Stomach (tissue), 19 donors: ENCODE measurements at regions of chr1 and their contacts with region 1.

Region 1: GRCh38 chr1:64823691-64824476 is 79.0 kb downstream of the RAVER2 start:
- DNase-seq: peak; percentile 75 to 92
- H3K4me3 ChIP-seq: no peak overlapping the region
- H3K27ac ChIP-seq: no peak overlapping the region
- H3K4me1 ChIP-seq: peaks cover 0 to 10% (median 5%) of the 10 kb centered on the region in 4 donors
- H3K27me3 ChIP-seq: no peaks in the 10 kb centered on the region
- CTCF ChIP-seq: peak in 5 of 7 experiments; percentile 73 to 89 (median 78)
- EP300 ChIP-seq: no peak
- POLR2A ChIP-seq: no peak

Region 2: DNA sequence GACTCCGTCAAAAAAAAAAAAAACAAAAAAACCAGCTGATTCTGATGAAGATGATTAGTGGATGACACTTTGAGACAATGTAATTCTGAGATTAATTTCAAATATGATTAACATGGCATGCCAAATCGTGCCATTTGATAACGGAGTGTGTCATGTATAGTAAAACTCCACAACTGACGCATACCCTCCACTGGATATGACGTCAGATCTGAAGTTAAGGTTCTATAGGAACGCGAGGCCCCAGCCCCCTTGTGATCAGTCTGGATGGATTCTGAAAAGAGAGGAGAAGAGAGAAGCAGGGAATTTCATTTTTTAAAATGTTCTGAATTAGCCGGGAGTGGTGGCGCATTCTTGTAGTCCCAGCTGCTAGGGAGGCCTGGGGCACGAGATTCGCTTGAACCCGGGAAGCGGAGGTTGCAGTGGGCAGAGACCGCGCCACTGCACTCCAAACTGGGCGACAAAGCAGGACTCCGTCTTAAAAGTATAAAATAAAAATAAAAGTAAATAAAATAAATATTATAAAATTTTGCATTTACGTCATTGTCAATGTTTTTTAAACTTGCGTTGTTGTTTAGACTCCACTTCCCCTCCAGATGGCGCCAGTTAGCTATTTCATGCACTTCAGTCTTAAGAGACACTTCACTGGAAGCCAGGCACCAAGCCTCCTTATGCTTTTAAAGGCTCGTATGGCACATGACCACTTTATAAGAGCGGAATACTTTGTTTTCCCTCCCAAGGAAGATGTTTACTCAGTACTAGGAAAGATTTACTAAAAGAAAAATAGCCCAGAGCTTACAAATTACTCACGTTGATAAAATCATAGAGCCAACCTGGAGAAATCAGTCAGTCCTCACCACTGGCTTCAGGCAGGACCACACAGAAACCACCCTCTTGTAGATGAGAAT is 555.0 kb before region 1 on chr1:
- intact Hi-C with region 1: loop called (anchors 10 kb)
- DNase-seq: peak; percentile 71 to 94
- H3K4me3 ChIP-seq: peak overlapping the region in 1 of 4 donors; percentile 3
- H3K27ac ChIP-seq: peak overlapping the region in 1 of 5 donors; percentile 24
- H3K4me1 ChIP-seq: peaks cover 0 to 7% (median 3%) of the 10 kb centered on the region in 4 donors
- H3K27me3 ChIP-seq: no peaks in the 10 kb centered on the region
- CTCF ChIP-seq: peak in 5 of 7 experiments; percentile 39 to 77 (median 64)
- EP300 ChIP-seq: no peak
- POLR2A ChIP-seq: no peak

Region 3: GRCh38 chr1:64539781-64540218 is 284.1 kb before region 1 on chr1:
- intact Hi-C with region 1: no loop called
- DNase-seq: peak; percentile 80 to 85
- H3K4me3 ChIP-seq: peak overlapping the region in 3 of 4 donors; percentile 5 to 35 (median 15)
- H3K27ac ChIP-seq: peak overlapping the region in 4 of 5 donors; percentile 66 to 86 (median 70)
- H3K4me1 ChIP-seq: peaks cover 24 to 69% (median 50%) of the 10 kb centered on the region in 4 donors
- H3K27me3 ChIP-seq: no peaks in the 10 kb centered on the region
- CTCF ChIP-seq: no peak
- EP300 ChIP-seq: no peak
- POLR2A ChIP-seq: no peak

Region 4: DNA sequence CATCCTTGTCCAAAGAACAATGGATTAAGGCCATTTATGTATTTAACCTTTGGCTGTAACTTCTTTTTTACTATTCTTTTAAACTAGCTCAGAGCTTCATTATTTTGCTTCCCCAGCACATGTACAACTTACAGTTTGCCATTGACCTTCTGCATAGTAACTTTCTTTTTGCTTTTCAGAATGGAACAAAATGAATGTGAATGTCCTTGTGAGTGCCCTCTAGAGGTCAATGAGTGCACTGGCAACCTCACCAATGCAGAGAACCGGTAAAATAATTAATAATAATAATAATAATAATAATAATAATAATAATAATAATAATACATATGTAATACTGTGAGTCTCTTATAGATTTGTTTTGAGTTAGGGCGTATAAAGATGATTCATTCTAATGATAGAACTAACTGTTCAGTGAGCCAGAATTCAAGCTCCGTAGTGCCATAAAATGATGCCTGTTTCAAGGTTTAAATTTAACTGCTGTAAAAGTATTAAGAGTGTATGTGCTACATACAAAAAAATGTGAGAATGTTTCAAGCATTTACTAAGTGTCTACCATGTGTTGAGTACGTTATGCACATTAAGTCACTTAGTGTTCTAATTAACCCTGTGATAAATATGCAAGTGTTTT is 148.1 kb before region 1 on chr1:
- intact Hi-C with region 1: no loop called
- DNase-seq: peak in 1 of 2 donors; percentile 59
- H3K4me3 ChIP-seq: no peak overlapping the region
- H3K27ac ChIP-seq: no peak overlapping the region
- H3K4me1 ChIP-seq: no peaks in the 10 kb centered on the region
- H3K27me3 ChIP-seq: no peaks in the 10 kb centered on the region
- CTCF ChIP-seq: peak in 3 of 7 experiments; percentile 58 to 70 (median 62)
- EP300 ChIP-seq: no peak
- POLR2A ChIP-seq: no peak

Region 5: DNA sequence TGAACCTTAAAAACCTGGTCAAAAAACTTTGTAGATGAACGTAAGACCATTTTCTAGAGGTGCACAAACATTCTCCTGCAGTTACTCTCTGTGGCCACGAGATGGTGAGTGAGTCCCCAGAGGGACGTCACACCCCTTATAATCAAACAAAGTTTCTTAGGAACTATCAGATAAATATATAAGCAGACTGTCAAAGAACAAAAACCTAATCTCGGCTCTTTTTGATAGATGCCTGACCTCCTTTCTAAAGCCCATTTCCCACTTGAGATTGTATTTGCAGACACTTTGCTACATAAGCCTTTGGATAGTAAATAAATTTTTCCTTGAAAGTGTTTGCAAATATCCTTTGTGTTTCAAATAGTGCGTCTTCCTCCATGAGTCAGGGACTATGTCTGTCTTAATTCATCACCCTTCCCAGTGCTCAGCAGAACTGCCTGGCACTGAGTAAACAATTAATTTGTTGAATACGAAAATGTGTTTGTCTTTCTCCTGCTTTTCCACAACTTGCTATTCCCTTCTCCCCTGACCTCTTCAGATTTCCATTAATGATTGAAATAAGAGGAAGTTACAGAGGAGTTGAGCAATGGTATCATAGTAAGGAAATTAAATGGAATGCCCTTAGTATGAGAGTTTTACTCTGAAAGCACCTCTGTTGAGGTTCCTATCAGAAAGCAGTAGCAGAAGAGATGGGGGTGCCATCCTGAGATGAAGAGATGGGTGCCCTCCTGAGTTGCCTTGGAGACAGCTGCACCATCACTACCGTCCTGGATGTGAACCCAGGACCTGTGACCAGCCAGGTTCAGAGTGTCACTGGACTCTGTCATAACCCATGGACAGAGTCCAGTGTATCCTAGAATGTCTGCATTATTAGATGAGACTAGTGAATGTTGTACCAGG is 136.8 kb before region 1 on chr1:
- intact Hi-C with region 1: loop called (anchors 5 kb)
- DNase-seq: peak; percentile 41 to 85
- H3K4me3 ChIP-seq: no peak overlapping the region
- H3K27ac ChIP-seq: peak overlapping the region in 4 of 5 donors; percentile 28 to 59 (median 34)
- H3K4me1 ChIP-seq: peaks cover 8 to 24% (median 16%) of the 10 kb centered on the region in 4 donors
- H3K27me3 ChIP-seq: no peaks in the 10 kb centered on the region
- CTCF ChIP-seq: peak in 5 of 7 experiments; percentile 82 to 88 (median 87)
- EP300 ChIP-seq: no peak
- POLR2A ChIP-seq: no peak

Region 6: DNA sequence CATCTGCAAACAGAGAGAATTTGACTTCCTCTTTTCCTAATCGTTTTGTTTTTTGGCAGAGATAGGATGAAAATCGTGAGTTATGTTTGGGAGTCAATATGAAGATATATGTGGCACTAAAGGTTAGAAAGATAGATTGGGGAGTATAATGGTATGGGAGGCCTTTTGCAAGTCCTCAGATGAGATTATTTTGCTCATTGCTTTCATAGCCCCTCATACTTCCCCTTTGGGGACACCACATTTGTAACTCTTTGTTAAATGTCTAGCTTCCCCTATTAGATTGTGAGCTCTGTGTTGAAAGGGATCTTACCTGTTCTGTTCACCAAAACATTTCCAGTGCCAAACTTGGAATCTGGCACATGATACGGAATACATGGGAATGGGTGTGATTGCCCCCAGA is 48.8 kb before region 1 on chr1:
- intact Hi-C with region 1: no loop called
- DNase-seq: no peak
- H3K4me3 ChIP-seq: no peak overlapping the region
- H3K27ac ChIP-seq: no peak overlapping the region
- H3K4me1 ChIP-seq: no peaks in the 10 kb centered on the region
- H3K27me3 ChIP-seq: no peaks in the 10 kb centered on the region
- CTCF ChIP-seq: no peak
- EP300 ChIP-seq: no peak
- POLR2A ChIP-seq: no peak

Region 7: DNA sequence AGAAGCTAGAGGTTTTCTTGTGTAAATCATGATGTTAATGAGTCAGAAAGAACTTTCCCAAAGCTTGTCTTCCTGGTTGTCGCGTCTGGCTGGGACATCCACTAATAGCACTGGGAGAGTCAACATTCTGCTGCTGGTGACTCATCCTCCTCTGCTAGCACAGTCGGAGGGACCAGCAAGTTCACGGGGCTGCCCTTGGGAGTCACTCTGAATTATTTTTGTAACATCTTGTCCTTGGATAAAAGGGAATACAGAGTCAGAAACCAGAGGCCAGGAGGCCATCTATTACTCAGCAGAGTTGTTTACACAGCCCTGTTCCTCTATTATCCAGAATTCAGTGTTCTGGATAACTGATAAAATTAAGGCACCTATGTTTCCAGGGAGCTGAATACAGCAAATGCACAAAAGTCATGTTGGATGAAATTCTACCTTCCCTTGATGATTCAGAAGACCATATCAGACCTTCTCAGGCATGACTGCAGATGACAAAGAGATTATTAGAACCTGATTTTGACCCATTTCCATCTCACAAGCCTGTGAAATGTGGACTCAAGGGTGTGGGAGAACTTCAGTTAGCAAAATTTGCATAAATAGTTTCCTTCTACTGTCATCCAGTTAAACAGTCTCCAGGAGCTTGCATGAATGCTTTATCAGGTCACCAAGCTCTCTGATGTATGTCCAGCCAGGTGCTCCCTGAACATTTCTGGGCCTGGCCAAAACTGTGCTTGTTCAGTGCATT is 74.4 kb after region 1 on chr1:
- intact Hi-C with region 1: no loop called
- DNase-seq: peak; percentile 75 to 86
- H3K4me3 ChIP-seq: no peak overlapping the region
- H3K27ac ChIP-seq: peak overlapping the region in 4 of 5 donors; percentile 70 to 85 (median 82)
- H3K4me1 ChIP-seq: peaks cover 27 to 91% (median 49%) of the 10 kb centered on the region in 4 donors
- H3K27me3 ChIP-seq: no peaks in the 10 kb centered on the region
- CTCF ChIP-seq: no peak
- EP300 ChIP-seq: peak; percentile 50
- POLR2A ChIP-seq: no peak